Posterior cingulate gyrus (tissue), 11 donors: ENCODE measurements at regions of chr7 and their contacts with region 1.

Region 1: GRCh38 chr7:145313551-145313950 is 477.7 kb upstream of the TPK1 start:
- DNase-seq: no peak

Region 2: GRCh38 chr7:143914938-143915652 is 1398.5 kb before region 1 on chr7:
- intact Hi-C with region 1: no loop called
- DNase-seq: no peak

Region 3: DNA sequence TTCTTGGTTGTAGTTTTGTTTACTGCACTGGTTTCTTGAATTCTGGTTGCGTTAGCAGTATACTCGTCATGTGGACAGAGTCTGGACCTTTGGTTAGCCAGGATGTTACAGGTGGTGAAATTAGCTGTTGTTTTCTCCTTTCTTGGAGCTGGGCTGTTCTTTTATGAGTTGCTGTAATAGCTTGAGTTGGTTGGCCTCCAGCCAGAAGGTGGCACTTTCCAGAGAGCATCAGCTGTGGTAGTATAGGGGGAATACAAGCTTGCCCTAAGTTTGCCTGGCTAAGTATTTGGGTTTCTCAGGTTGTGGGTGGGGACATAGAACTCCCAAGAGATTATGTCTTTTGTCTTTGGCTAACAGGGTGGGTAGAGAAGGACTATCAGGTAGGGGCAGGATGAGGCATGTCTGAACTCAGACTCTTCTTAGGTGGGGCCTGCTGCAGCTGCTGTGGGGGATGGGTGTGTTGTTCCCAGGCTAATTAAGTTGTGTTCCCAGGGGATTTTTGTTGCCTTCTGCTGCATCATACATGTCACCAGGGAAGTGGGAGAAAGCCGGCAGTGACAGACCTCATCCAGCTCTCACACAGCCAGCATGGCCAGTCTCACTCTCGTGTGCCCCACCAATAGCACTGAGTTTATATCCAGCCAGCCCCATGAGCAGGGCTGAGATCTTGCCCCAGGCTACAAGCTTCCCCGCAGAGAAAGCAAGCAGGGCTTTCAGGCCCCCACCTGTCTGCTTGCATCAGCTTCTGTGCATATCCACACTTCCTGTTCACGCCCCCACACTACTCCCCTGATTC is 231.0 kb before region 1 on chr7:
- intact Hi-C with region 1: no loop called
- DNase-seq: peak in 2 of 10 donors; percentile 12 to 59

Region 4: DNA sequence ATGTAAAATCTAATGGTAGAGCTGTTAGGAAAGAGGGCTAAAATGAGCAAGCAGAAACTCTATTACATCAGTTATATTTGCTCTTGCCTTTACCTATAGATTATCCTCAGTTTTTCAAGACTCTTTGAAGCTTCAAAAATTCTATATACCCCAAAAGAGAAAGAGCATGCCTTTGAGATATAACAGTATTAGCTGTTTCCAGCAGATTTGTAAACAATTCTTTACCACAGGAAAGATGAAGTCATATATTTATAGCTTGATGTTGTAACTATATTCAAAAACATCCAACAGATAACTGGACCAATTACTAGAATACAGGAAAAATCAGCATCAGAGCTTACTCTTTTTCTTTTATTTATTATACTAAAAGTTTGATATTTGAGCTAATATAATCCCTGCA is 61.5 kb before region 1 on chr7:
- intact Hi-C with region 1: loop called (anchors 10 kb)
- DNase-seq: no peak